Endothelial cell of umbilical vein (primary cell): ENCODE measurements at regions of chr15 and their contacts with region 1.

Region 1: DNA sequence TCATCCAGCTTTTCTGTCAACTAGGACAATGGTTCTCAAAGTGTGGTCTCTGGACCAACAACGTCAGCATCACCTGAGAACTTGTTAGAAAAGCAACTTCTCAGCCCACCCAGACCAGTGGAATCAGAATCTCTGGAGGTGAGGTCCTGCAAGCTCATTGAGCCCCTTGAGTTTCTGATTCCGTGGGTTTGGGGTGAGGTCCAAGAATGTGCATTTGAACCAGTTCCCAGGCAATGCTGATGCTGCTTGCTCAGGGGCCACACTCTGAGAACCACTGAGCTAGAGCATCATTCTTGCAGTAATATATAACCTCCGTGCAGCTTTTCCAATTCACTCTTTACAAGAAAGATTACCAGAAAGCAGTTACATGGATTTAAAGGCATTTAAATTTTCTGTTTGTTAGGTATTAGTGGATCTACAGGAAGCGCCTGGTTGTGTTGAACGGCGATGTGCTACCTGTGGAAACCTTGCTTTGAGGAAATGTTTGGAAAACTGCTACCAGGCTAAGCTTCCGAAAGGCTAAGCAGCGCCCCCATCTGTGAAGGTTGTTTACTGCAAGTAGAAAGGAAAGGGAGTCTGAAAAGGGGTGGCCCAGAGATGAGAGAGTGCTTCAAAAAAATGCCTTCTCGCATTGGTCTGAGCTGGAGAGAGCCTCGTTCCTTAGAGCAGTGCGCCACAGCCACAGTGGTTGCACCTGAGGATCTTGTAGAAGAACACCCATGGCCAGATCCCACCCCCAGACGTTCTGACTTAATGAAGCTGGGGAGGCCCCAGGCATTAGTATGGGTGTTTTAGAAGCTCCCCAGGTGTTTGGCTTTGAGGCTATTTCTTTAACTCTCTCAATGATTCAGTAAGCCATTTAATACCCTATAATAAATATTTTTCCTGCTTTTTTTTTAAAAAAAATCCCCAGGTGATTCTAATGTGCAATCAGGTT is 50.0 kb downstream of the RLBP1 start:
- DNase-seq: peak; percentile 65
- H3K4me3 ChIP-seq: no peak overlapping the region
- H3K27ac ChIP-seq: no peak overlapping the region
- H3K4me1 ChIP-seq: peaks cover 31% of the 10 kb centered on the region
- H3K27me3 ChIP-seq: no peaks in the 10 kb centered on the region
- CTCF ChIP-seq: peak; percentile 80 to 81
- POLR2A ChIP-seq: no peak

Region 2: GRCh38 chr15:89034288-89034687 is 137.1 kb before region 1 on chr15:
- CTCF ChIA-PET with region 1: interaction called, 17 read pairs
- POLR2A ChIA-PET with region 1: no interaction called
- dilution Hi-C with region 1: no loop called
- intact Hi-C with region 1: no loop called
- DNase-seq: peak; percentile 19
- H3K4me3 ChIP-seq: no peak overlapping the region
- H3K27ac ChIP-seq: no peak overlapping the region
- H3K4me1 ChIP-seq: no peaks in the 10 kb centered on the region
- H3K27me3 ChIP-seq: peaks cover 0 to 3% of the 10 kb centered on the region in 2 experiments
- CTCF ChIP-seq: peak in 1 of 2 donors; percentile 8
- POLR2A ChIP-seq: no peak

Region 3: DNA sequence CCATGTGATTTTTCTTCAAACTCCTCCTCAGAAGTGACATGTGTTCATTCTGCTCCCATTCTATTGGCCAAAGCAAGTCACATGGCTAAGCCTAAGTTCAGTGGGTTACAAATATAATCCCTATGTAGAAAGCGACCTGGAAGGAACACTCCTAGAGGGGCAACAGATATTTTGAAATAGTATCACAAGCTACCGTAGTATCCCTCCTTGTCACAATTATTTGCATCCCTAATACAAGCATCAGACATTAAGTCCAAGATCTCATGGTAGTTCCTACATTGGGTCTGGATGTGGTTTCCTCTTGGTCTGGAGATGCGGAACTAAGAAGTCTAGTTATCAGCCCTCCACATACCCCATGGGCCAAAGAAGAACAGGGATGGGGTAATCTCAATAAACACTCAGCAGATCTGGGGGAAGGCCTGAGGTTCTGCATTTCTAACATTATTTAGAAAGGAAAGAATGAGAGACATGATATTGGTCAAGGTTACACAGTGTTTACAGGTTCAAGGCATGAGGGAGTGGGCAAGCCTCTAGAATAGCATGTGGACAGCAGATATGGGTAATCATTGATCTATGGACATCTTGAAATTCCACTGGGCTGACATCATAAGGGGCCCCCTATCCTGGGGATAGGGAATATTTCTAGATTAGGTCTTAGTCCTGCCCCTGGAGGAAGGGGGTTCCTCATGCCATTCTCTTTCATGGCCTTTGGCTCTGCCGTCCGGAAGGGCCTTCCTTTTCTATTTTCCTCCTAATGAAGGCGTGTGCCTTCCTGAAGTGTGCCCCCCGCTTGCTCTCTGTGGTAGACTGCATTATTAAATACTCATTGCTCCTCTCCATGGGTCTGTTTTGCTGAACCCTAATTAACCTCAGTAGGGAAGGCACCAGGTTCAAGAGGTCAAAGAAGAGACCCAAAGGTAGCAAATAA is 100.9 kb before region 1 on chr15:
- CTCF ChIA-PET with region 1: interaction called, 11 read pairs
- POLR2A ChIA-PET with region 1: no interaction called
- dilution Hi-C with region 1: loop called (anchors 25 kb)
- intact Hi-C with region 1: no loop called
- DNase-seq: no peak
- H3K4me3 ChIP-seq: no peak overlapping the region
- H3K27ac ChIP-seq: no peak overlapping the region
- H3K4me1 ChIP-seq: no peaks in the 10 kb centered on the region
- H3K27me3 ChIP-seq: no peaks in the 10 kb centered on the region
- CTCF ChIP-seq: no peak
- POLR2A ChIP-seq: no peak

Region 4: GRCh38 chr15:89101302-89102191 is 69.9 kb before region 1 on chr15:
- CTCF ChIA-PET with region 1: interaction called, 20 read pairs
- POLR2A ChIA-PET with region 1: no interaction called
- dilution Hi-C with region 1: no loop called
- intact Hi-C with region 1: loop called (anchors 1 kb)
- DNase-seq: peak; percentile 91
- H3K4me3 ChIP-seq: no peak overlapping the region
- H3K27ac ChIP-seq: peak overlapping the region; percentile 94
- H3K4me1 ChIP-seq: peaks cover 57% of the 10 kb centered on the region
- H3K27me3 ChIP-seq: no peaks in the 10 kb centered on the region
- CTCF ChIP-seq: no peak
- POLR2A ChIP-seq: no peak

Region 5: DNA sequence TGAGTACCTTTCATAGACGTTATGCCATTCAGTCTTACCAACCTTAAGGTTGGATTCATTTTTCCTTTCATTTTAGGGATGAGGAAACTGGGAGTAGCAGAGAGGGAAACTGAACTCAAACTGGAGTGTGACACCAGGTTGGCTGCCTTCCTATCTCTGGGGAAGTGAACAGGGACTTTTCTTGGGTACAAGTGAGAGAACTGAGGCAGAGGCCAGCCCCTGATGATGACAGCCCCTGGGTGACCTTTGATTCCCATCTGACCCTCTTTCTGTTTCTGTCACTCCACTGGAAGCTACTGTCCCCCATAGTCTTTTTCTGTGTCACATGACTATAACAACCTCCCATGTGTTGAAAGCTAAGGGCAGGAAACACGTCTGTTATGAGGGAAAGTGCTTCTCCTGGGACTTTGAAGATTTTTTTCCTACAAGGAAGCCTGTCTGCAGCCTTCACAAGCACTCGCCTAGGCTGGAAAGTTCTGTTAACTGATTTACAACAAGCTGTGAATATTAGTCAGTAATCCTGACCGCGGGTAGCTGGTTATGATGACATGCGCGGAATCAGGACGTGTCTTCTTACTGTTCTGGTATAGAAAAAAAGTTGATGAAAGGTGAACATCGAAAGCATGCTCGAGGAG is 51.8 kb before region 1 on chr15:
- CTCF ChIA-PET with region 1: interaction called, 11 read pairs
- POLR2A ChIA-PET with region 1: no interaction called
- dilution Hi-C with region 1: no loop called
- intact Hi-C with region 1: no loop called
- DNase-seq: peak; percentile 85
- H3K4me3 ChIP-seq: no peak overlapping the region
- H3K27ac ChIP-seq: peak overlapping the region; percentile 85
- H3K4me1 ChIP-seq: peaks cover 35% of the 10 kb centered on the region
- H3K27me3 ChIP-seq: no peaks in the 10 kb centered on the region
- CTCF ChIP-seq: no peak
- POLR2A ChIP-seq: no peak

Region 6: GRCh38 chr15:89143503-89144162 is 27.8 kb before region 1 on chr15:
- CTCF ChIA-PET with region 1: interaction called, 22 read pairs
- POLR2A ChIA-PET with region 1: no interaction called
- dilution Hi-C with region 1: no loop called
- intact Hi-C with region 1: loop called (anchors 1 kb)
- DNase-seq: peak; percentile 88
- H3K4me3 ChIP-seq: no peak overlapping the region
- H3K27ac ChIP-seq: peak overlapping the region; percentile 68
- H3K4me1 ChIP-seq: peaks cover 26% of the 10 kb centered on the region
- H3K27me3 ChIP-seq: no peaks in the 10 kb centered on the region
- CTCF ChIP-seq: no peak
- POLR2A ChIP-seq: no peak